CD8-positive, alpha-beta T cell (primary cell): ENCODE measurements at regions of chr3 and their contacts with region 1.

Region 1: DNA sequence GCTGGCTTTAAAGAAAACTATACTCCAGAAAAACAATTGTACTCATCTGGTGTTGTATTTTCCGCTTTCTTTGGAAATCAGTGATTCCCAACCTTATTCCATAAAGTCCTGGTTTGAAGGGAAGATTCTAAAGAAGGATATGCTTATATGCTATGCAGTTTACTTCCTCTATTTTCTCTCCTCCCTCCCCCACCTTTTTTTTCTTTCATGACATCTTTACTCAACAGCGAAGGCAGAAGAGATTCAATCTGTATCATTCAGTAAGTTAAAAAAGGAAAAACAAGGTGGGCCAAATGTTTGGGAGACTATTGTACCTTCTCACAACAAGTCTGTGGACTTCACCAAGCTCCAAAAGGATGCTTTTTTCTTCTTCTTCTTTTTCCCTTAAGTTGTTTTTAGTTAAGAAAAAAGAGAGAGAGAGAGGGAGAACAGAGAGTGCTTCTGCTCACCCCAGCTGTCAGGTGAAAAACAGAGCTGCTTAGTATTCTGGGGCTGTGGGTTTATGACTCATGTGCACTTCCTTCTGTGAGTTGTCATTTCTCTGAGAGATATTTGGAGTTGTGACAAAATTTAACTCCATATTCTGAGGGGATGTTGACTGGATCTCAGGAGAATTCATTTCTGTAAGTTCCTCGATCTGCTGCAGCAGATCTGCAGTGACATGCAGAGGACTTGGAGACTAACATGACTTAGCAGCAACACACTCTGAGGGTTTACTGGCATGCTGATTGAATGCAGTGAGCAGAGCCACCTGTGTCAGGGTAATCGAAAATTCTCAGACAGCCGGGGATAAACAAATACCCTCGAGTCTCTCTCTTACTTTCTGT is 70.7 kb downstream of the SSR3 start:
- DNase-seq: peak in 8 of 9 experiments; percentile 16 to 81 (median 58)
- ATAC-seq: peak; percentile 85
- H3K4me3 ChIP-seq: peak overlapping the region; percentile 21 to 36
- H3K4me3 Mint-ChIP-seq: peak overlapping the region; percentile 74
- H3K27ac ChIP-seq: peak overlapping the region; percentile 28 to 82
- H3K27ac Mint-ChIP-seq: peak overlapping the region; percentile 93
- H3K4me1 ChIP-seq: peaks cover 24% of the 10 kb centered on the region
- H3K4me1 Mint-ChIP-seq: peaks cover 42% of the 10 kb centered on the region
- H3K27me3 ChIP-seq: no peaks in the 10 kb centered on the region
- H3K27me3 Mint-ChIP-seq: no peaks in the 10 kb centered on the region
- CTCF ChIP-seq: no peak

Region 2: GRCh38 chr3:156519758-156520162 is 35.6 kb after region 1 on chr3:
- CTCF ChIA-PET with region 1: no interaction called
- POLR2A ChIA-PET with region 1: interaction called, 7 read pairs
- intact Hi-C with region 1: loop called in 1 of 2 experiments (anchors 5 kb)
- DNase-seq: no peak
- ATAC-seq: no peak
- H3K4me3 ChIP-seq: no peak overlapping the region
- H3K4me3 Mint-ChIP-seq: no peak overlapping the region
- H3K27ac ChIP-seq: no peak overlapping the region
- H3K27ac Mint-ChIP-seq: no peak overlapping the region
- H3K4me1 ChIP-seq: peaks cover 2% of the 10 kb centered on the region
- H3K4me1 Mint-ChIP-seq: peaks cover 4% of the 10 kb centered on the region
- H3K27me3 ChIP-seq: no peaks in the 10 kb centered on the region
- H3K27me3 Mint-ChIP-seq: peaks cover 14% of the 10 kb centered on the region
- CTCF ChIP-seq: no peak

Region 3: GRCh38 chr3:156691920-156692319 is 207.7 kb after region 1 on chr3:
- CTCF ChIA-PET with region 1: no interaction called
- POLR2A ChIA-PET with region 1: no interaction called
- intact Hi-C with region 1: no loop called
- DNase-seq: no peak
- ATAC-seq: no peak
- H3K4me3 ChIP-seq: no peak overlapping the region
- H3K4me3 Mint-ChIP-seq: no peak overlapping the region
- H3K27ac ChIP-seq: no peak overlapping the region
- H3K27ac Mint-ChIP-seq: no peak overlapping the region
- H3K4me1 ChIP-seq: no peaks in the 10 kb centered on the region
- H3K4me1 Mint-ChIP-seq: peaks cover 52% of the 10 kb centered on the region
- H3K27me3 ChIP-seq: no peaks in the 10 kb centered on the region
- H3K27me3 Mint-ChIP-seq: no peaks in the 10 kb centered on the region
- CTCF ChIP-seq: no peak

Region 4: GRCh38 chr3:156826144-156826895 is 342.1 kb after region 1 on chr3 and contains the start of gene LEKR1:
- CTCF ChIA-PET with region 1: no interaction called
- POLR2A ChIA-PET with region 1: no interaction called
- intact Hi-C with region 1: loop called in 1 of 2 experiments (anchors 5 kb)
- DNase-seq: peak; percentile 28 to 92 (median 67)
- ATAC-seq: peak; percentile 54
- H3K4me3 ChIP-seq: peak within 1 kb of the TSS; percentile 71 to 81
- H3K4me3 Mint-ChIP-seq: peak within 1 kb of the TSS; percentile 89
- H3K27ac ChIP-seq: peak within 1 kb of the TSS; percentile 73 to 92
- H3K27ac Mint-ChIP-seq: peak within 1 kb of the TSS; percentile 95
- H3K4me1 ChIP-seq: peaks cover 9% of the 10 kb centered on the region
- H3K4me1 Mint-ChIP-seq: peaks cover 13% of the 10 kb centered on the region
- H3K27me3 ChIP-seq: no peaks in the 10 kb centered on the region
- H3K27me3 Mint-ChIP-seq: no peaks in the 10 kb centered on the region
- CTCF ChIP-seq: no peak
- total RNA-seq, gene LEKR1: 1.5 to 1.8 TPM